MCF 10A (cell line): ENCODE measurements at regions of chr19 and their contacts with region 1.

Region 1: GRCh38 chr19:47483800-47484690 is at the start of gene KPTN:
- DNase-seq: peak; percentile 87
- H3K4me3 Mint-ChIP-seq: peak within 1 kb of the TSS; percentile 99
- H3K27ac Mint-ChIP-seq: peak within 1 kb of the TSS; percentile 99
- H3K4me1 Mint-ChIP-seq: peaks cover 5% of the 10 kb centered on the region
- H3K27me3 Mint-ChIP-seq: no peaks in the 10 kb centered on the region
- CTCF ChIP-seq: peak; percentile 99
- total RNA-seq, gene KPTN: 9.7 and 17.6 TPM in 2 replicates

Region 2: GRCh38 chr19:47510008-47510407 is 26.0 kb after region 1 on chr19:
- CTCF ChIA-PET with region 1: interaction called, 5 read pairs
- POLR2A ChIA-PET with region 1: interaction called, 15 read pairs
- intact Hi-C with region 1: no loop called
- DNase-seq: peak; percentile 90
- H3K4me3 Mint-ChIP-seq: peak overlapping the region; percentile 64
- H3K27ac Mint-ChIP-seq: peak overlapping the region; percentile 46
- H3K4me1 Mint-ChIP-seq: peaks cover 47% of the 10 kb centered on the region
- H3K27me3 Mint-ChIP-seq: no peaks in the 10 kb centered on the region
- CTCF ChIP-seq: no peak

Region 3: DNA sequence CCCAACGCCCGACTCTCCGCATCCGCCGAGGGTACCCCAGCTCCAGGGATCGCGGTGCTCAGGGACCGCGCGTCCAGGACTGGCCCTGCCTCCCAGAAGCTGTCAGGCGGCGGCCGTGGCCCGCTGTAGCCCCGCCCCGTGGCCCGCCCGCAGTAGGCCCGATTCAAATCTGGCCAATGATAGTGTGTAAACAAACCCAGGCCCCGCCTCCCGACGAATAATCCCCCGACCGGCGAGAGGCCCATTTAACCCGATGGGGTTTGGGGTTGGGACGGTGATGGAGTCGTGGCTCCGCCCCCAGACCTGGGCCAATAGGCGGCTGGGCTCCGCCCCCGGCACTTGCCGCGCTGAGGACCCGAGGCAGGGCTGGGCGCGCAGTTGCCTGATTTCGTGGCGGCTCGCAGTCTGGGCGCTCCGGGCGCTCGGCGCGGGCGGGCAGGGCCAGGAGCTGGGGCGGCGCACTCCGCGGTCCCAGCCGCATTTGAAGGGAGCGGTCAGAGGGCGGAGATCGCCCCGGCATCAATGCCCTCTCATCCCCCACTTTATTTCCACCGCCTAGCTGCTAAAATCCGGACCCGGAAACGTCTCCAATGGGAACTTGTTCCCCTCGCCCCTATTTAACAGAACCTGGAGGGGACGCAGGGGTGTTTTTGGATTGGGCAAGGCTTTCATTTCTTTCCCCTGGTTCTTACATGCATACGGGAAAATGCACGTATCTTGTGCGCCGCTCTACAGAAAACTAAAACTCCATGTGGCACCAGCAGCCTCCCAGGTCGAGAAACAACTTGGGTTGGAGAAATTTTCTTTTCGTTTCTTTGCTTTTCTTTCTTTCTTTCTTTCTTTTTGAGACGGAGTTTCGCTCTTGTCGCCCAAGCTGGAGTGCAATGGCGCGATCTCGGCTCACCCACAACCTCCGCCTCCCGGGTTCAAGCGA is 116.5 kb after region 1 on chr19:
- CTCF ChIA-PET with region 1: no interaction called
- POLR2A ChIA-PET with region 1: interaction called, 25 read pairs
- intact Hi-C with region 1: no loop called
- DNase-seq: peak; percentile 100
- H3K4me3 Mint-ChIP-seq: peak overlapping the region; percentile 97
- H3K27ac Mint-ChIP-seq: peak overlapping the region; percentile 97
- H3K4me1 Mint-ChIP-seq: peaks cover 30% of the 10 kb centered on the region
- H3K27me3 Mint-ChIP-seq: no peaks in the 10 kb centered on the region
- CTCF ChIP-seq: no peak

Region 4: GRCh38 chr19:47682939-47683338 is 198.9 kb after region 1 on chr19:
- CTCF ChIA-PET with region 1: no interaction called
- POLR2A ChIA-PET with region 1: no interaction called
- intact Hi-C with region 1: no loop called
- DNase-seq: no peak
- H3K4me3 Mint-ChIP-seq: no peak overlapping the region
- H3K27ac Mint-ChIP-seq: no peak overlapping the region
- H3K4me1 Mint-ChIP-seq: no peaks in the 10 kb centered on the region
- H3K27me3 Mint-ChIP-seq: no peaks in the 10 kb centered on the region
- CTCF ChIP-seq: no peak

Region 5: DNA sequence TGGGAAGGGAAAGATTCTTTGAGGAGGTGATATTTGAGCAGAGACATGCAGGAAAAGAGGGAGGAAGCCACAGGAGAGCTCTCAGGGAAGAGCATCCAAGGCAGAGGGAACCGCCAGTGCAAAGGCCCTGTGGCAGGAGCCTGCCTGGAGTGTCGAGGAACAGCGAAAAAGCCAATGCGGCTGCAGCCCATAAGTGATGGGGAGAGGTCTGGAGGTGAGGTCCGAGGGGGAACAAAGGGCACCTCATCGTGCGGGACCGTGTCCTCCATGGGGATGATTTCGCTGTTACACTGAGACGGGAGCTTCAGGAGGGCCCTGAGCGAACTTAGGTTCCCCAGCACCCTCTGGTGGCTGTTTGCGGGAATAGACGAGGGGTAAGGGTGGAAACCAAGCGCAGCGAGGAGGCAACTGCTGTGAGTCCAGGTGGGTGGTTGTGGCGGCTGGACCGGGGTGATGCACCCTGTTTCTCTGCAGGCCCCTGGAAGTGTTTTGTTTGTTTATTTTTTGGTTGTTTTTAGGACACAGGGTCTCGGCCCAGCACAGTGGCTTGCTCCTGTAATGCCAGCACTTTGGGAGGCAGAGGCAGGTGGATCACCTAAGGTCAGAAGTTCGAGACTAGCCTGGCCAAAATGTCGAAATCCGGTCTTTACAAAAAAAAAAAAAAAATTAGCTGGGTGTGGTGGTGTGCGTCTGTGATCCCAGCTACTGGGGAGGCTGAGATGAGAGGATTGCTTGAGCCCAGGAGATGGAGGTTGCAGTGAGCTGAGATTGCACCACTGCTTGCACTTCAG is 223.3 kb after region 1 on chr19:
- CTCF ChIA-PET with region 1: interaction called, 5 read pairs
- POLR2A ChIA-PET with region 1: interaction called, 11 read pairs
- intact Hi-C with region 1: no loop called
- DNase-seq: peak; percentile 88
- H3K4me3 Mint-ChIP-seq: no peak overlapping the region
- H3K27ac Mint-ChIP-seq: no peak overlapping the region
- H3K4me1 Mint-ChIP-seq: no peaks in the 10 kb centered on the region
- H3K27me3 Mint-ChIP-seq: no peaks in the 10 kb centered on the region
- CTCF ChIP-seq: peak; percentile 77